AG04449 (cell line): ENCODE measurements at regions of chr7 and their contacts with region 1.

Region 1: GRCh38 chr7:100705753-100706671 is at the start of gene POP7:
- DNase-seq: peak; percentile 88
- H3K4me3 ChIP-seq: peak within 1 kb of the TSS; percentile 92
- CTCF ChIP-seq: no peak

Region 2: GRCh38 chr7:100444311-100445278 is 261.4 kb before region 1 on chr7:
- CTCF ChIA-PET with region 1: no interaction called
- POLR2A ChIA-PET with region 1: no interaction called
- DNase-seq: no peak
- H3K4me3 ChIP-seq: no peak overlapping the region
- CTCF ChIP-seq: no peak

Region 3: GRCh38 chr7:100586266-100587025 is 119.6 kb before region 1 on chr7 and contains the start of gene FBXO24:
- CTCF ChIA-PET with region 1: interaction called, 12 read pairs
- POLR2A ChIA-PET with region 1: interaction called, 8 read pairs
- DNase-seq: peak; percentile 100
- H3K4me3 ChIP-seq: peak within 1 kb of the TSS; percentile 92
- CTCF ChIP-seq: no peak

Region 4: DNA sequence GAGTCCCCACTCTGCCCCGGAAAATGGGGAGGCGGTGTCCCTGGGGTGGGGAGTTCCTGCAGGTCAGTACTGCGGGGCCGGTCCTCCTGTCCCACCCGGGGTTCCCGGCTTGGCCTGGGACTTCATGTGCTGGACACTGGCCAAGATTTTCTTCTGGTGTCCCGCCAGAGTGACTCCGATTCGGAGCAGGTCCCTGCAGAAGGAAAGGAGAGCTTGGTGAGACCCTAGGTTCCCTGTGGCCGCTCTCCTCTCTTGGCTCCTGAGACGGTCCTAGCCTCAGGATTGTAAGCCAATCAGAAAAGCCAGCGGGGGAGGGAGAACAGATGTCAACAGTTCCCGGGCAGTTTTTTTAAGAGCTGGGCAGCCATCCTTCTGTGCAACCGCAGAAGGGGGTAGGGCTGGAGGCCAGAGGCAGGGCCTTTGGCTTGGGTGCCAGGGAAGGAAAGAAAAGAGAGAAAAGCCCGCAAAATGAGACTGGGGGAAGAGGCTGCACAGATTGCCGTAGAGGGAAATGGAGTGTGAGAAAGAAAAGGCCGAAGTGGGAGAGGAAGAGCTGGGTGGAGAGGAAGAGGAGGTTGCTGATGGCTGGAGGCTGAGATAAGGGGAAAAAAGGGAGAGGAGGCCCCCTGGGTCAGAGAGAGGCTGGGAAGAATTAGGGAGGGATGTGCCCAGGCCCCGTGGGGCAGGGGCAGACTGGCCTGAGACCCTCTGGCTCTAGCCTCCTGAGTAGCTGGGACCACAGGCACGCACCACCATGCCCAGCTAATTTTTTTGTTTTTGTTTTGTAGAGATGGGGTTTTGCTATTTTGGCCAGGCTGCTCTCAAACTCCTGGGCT is 97.6 kb after region 1 on chr7:
- CTCF ChIA-PET with region 1: interaction called, 18 read pairs
- POLR2A ChIA-PET with region 1: interaction called, 4 read pairs
- DNase-seq: peak; percentile 49
- H3K4me3 ChIP-seq: no peak overlapping the region
- CTCF ChIP-seq: no peak

Region 5: GRCh38 chr7:100837099-100837836 is 131.3 kb after region 1 on chr7:
- CTCF ChIA-PET with region 1: interaction called, 10 read pairs
- POLR2A ChIA-PET with region 1: no interaction called
- DNase-seq: peak; percentile 37
- H3K4me3 ChIP-seq: peak overlapping the region; percentile 49
- CTCF ChIP-seq: no peak

Region 6: GRCh38 chr7:100957832-100958421 is 251.9 kb after region 1 on chr7:
- CTCF ChIA-PET with region 1: no interaction called
- POLR2A ChIA-PET with region 1: no interaction called
- DNase-seq: no peak
- H3K4me3 ChIP-seq: no peak overlapping the region
- CTCF ChIP-seq: no peak